CD4-positive, alpha-beta memory T cell (primary cell): ENCODE measurements at regions of chr4 and their contacts with region 1.

Region 1: GRCh38 chr4:39469429-39470077 is 10.7 kb downstream of the LIAS start:
- DNase-seq: peak in 4 of 5 donors; percentile 45 to 58 (median 50)
- H3K4me3 ChIP-seq: no peak overlapping the region
- H3K4me3 Mint-ChIP-seq: no peak overlapping the region
- H3K27ac ChIP-seq: no peak overlapping the region
- H3K27ac Mint-ChIP-seq: peak overlapping the region in 3 of 7 donors; percentile 11 to 29 (median 22)
- H3K4me1 ChIP-seq: no peaks in the 10 kb centered on the region
- H3K4me1 Mint-ChIP-seq: peaks cover 0 to 1% (median 0%) of the 10 kb centered on the region in 4 donors
- H3K27me3 ChIP-seq: no peaks in the 10 kb centered on the region
- H3K27me3 Mint-ChIP-seq: no peaks in the 10 kb centered on the region

Region 2: DNA sequence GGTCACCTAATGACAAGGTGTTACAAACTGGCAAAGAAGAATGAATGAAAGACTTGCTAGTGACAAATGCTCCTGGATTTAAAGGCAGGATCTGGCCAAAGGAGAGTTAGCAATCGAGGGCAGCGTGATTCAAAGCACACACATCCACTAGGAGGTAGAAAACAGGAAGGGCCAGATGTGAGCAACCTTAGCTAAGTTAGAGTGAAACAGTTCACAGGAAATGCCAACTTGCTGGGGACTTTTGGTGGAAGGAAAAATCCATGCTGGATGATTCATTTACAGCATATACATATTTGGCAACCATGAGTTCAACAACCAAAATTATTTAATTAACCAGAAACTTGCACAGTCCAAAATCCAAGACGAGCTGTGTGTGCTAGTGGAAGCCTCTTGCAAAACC is 1232.4 kb before region 1 on chr4:
- CTCF ChIA-PET with region 1: no interaction called
- POLR2A ChIA-PET with region 1: no interaction called
- intact Hi-C with region 1: no loop called
- DNase-seq: no peak
- H3K4me3 ChIP-seq: no peak overlapping the region
- H3K4me3 Mint-ChIP-seq: no peak overlapping the region
- H3K27ac ChIP-seq: no peak overlapping the region
- H3K27ac Mint-ChIP-seq: no peak overlapping the region
- H3K4me1 ChIP-seq: no peaks in the 10 kb centered on the region
- H3K4me1 Mint-ChIP-seq: peaks cover 0 to 4% (median 1%) of the 10 kb centered on the region in 4 donors
- H3K27me3 ChIP-seq: no peaks in the 10 kb centered on the region
- H3K27me3 Mint-ChIP-seq: no peaks in the 10 kb centered on the region

Region 3: GRCh38 chr4:38647101-38647819 is 822.3 kb before region 1 on chr4:
- CTCF ChIA-PET with region 1: no interaction called
- POLR2A ChIA-PET with region 1: no interaction called
- intact Hi-C with region 1: no loop called
- DNase-seq: no peak
- H3K4me3 ChIP-seq: no peak overlapping the region
- H3K4me3 Mint-ChIP-seq: no peak overlapping the region
- H3K27ac ChIP-seq: no peak overlapping the region
- H3K27ac Mint-ChIP-seq: peak overlapping the region in 4 of 7 donors; percentile 0 to 78 (median 44)
- H3K4me1 ChIP-seq: peaks cover 16% of the 10 kb centered on the region
- H3K4me1 Mint-ChIP-seq: peaks cover 7 to 28% (median 15%) of the 10 kb centered on the region in 4 donors
- H3K27me3 ChIP-seq: no peaks in the 10 kb centered on the region
- H3K27me3 Mint-ChIP-seq: peaks cover 4% of the 10 kb centered on the region in 2 donors

Region 4: GRCh38 chr4:39658756-39659155 is 189.2 kb after region 1 on chr4:
- CTCF ChIA-PET with region 1: interaction called, 16 read pairs
- POLR2A ChIA-PET with region 1: no interaction called
- intact Hi-C with region 1: no loop called
- DNase-seq: no peak
- H3K4me3 ChIP-seq: no peak overlapping the region
- H3K4me3 Mint-ChIP-seq: no peak overlapping the region
- H3K27ac ChIP-seq: no peak overlapping the region
- H3K27ac Mint-ChIP-seq: no peak overlapping the region
- H3K4me1 ChIP-seq: no peaks in the 10 kb centered on the region
- H3K4me1 Mint-ChIP-seq: no peaks in the 10 kb centered on the region
- H3K27me3 ChIP-seq: no peaks in the 10 kb centered on the region
- H3K27me3 Mint-ChIP-seq: no peaks in the 10 kb centered on the region

Region 5: DNA sequence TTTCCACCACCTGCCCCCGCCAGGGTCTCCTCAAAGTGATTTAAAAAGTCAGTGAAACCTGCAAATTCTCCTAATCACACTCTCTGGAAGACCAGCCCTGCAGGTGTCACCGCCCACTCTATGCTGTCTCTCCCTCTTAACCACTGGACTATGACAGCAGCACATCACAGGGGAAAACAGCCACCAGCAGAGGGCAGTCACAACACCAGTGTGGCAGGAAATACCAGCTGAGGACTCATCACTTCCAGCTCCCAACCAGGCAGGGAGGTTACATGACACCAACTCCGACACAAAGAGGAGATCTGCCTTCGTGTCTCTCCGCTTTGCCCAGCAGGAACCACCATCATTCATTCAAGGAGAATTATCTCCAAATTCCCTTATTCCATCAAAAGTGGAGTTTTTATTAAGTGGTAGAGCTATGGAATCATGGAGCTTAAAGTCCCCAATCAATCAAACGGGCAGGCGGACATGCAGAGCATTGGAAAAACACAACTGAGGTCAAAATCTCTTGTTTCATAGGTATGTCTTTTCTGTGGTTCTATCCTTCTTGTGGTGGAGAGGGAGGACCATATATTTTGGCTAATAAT is 1371.5 kb after region 1 on chr4:
- CTCF ChIA-PET with region 1: no interaction called
- POLR2A ChIA-PET with region 1: no interaction called
- intact Hi-C with region 1: loop called (anchors 5 kb)
- DNase-seq: peak; percentile 23 to 45 (median 41)
- H3K4me3 ChIP-seq: no peak overlapping the region
- H3K4me3 Mint-ChIP-seq: no peak overlapping the region
- H3K27ac ChIP-seq: no peak overlapping the region
- H3K27ac Mint-ChIP-seq: peak overlapping the region in 1 of 7 donors; percentile 37
- H3K4me1 ChIP-seq: no peaks in the 10 kb centered on the region
- H3K4me1 Mint-ChIP-seq: no peaks in the 10 kb centered on the region
- H3K27me3 ChIP-seq: no peaks in the 10 kb centered on the region
- H3K27me3 Mint-ChIP-seq: peaks cover 6 to 8% of the 10 kb centered on the region in 2 donors